T-cell (primary cell): ENCODE measurements at regions of chr4 and their contacts with region 1.

Region 1: GRCh38 chr4:112296949-112297880 is at the start of gene ALPK1:
- DNase-seq: peak in 1 of 35 experiments; percentile 65
- ATAC-seq: peak; percentile 70 to 97 (median 78)
- H3K4me3 ChIP-seq: peak within 1 kb of the TSS; percentile 10 to 36
- H3K4me3 Mint-ChIP-seq: peak within 1 kb of the TSS; percentile 80 to 84 (median 80)
- H3K27ac ChIP-seq: peak within 1 kb of the TSS; percentile 62
- H3K27ac Mint-ChIP-seq: peak within 1 kb of the TSS; percentile 88 to 94
- H3K4me1 ChIP-seq: peaks cover 12 to 39% of the 10 kb centered on the region in 2 experiments
- H3K4me1 Mint-ChIP-seq: peaks cover 25 to 30% (median 30%) of the 10 kb centered on the region in 3 donors
- H3K27me3 ChIP-seq: no peaks in the 10 kb centered on the region
- H3K27me3 Mint-ChIP-seq: no peaks in the 10 kb centered on the region
- total RNA-seq, gene ALPK1: 8.3 to 22.9 (median 9.3) TPM

Region 2: DNA sequence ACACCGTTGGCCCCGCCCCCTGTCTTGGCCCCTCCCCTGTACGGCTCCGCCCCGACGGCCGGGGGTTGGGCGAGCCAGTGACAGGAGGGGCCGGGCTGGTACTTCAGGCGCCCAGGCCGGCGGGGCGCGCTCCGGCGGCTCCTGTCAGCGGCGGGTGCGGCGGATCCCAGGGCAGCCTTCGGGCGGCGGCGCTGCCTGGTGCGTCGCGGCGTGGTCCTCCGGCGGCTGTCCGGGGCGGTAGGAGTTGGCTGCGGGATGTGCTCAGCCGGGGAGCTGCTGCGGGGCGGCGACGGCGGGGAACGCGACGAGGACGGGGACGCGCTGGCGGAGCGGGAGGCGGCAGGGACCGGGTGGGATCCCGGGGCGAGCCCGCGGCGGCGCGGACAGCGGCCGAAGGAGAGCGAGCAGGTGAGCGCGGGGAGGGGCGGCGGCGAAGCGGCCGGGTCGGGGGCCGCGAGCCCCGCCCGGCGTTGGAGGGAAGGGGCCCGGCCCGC is 151.8 kb before region 1 on chr4 and contains the start of gene FAM241A:
- CTCF ChIA-PET with region 1: no interaction called
- POLR2A ChIA-PET with region 1: interaction called in 1 of 2 experiments, 12 read pairs
- DNase-seq: peak; percentile 75 to 96 (median 86)
- ATAC-seq: peak; percentile 90 to 98 (median 96)
- H3K4me3 ChIP-seq: peak within 1 kb of the TSS; percentile 90 to 91
- H3K4me3 Mint-ChIP-seq: peak within 1 kb of the TSS; percentile 82 to 89 (median 86)
- H3K27ac ChIP-seq: peak within 1 kb of the TSS; percentile 80
- H3K27ac Mint-ChIP-seq: peak within 1 kb of the TSS; percentile 68 to 95
- H3K4me1 ChIP-seq: peaks cover 5 to 8% of the 10 kb centered on the region in 2 experiments
- H3K4me1 Mint-ChIP-seq: peaks cover 28 to 45% (median 28%) of the 10 kb centered on the region in 3 donors
- H3K27me3 ChIP-seq: no peaks in the 10 kb centered on the region
- H3K27me3 Mint-ChIP-seq: no peaks in the 10 kb centered on the region
- total RNA-seq, gene FAM241A: 1.4 to 3.4 (median 2.0) TPM

Region 3: DNA sequence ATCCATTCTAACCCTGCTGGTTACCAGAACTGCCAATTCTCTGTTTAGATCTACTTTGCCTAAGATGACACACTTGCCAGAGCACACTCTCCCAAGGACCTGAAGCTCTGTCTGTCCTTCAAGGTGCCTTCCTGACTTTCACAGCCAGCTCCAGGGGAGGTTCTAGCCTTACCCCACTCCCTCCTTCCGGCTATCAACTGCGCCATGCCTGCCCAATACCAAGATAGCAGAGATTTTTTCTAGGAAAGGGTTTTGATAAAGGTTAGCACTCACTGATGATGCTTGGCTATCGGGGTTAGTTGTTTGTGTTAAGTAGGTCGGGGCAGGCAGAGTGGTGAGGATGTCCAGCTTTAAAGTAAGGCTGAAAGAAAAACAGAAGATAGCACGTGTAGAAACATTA is 14.3 kb after region 1 on chr4:
- CTCF ChIA-PET with region 1: no interaction called
- POLR2A ChIA-PET with region 1: no interaction called
- DNase-seq: no peak
- ATAC-seq: no peak
- H3K4me3 ChIP-seq: no peak overlapping the region
- H3K4me3 Mint-ChIP-seq: no peak overlapping the region
- H3K27ac ChIP-seq: no peak overlapping the region
- H3K27ac Mint-ChIP-seq: no peak overlapping the region
- H3K4me1 ChIP-seq: peaks cover 0 to 4% of the 10 kb centered on the region in 2 experiments
- H3K4me1 Mint-ChIP-seq: peaks cover 29 to 33% (median 31%) of the 10 kb centered on the region in 3 donors
- H3K27me3 ChIP-seq: no peaks in the 10 kb centered on the region
- H3K27me3 Mint-ChIP-seq: no peaks in the 10 kb centered on the region

Region 4: GRCh38 chr4:112321776-112322684 is 24.8 kb after region 1 on chr4:
- CTCF ChIA-PET with region 1: interaction called in 1 of 2 experiments, 3 read pairs
- POLR2A ChIA-PET with region 1: interaction called, 8 to 16 read pairs
- DNase-seq: peak; percentile 43 to 89 (median 75)
- ATAC-seq: peak; percentile 69 to 81 (median 71)
- H3K4me3 ChIP-seq: no peak overlapping the region
- H3K4me3 Mint-ChIP-seq: peak overlapping the region in 1 of 3 donors; percentile 36
- H3K27ac ChIP-seq: no peak overlapping the region
- H3K27ac Mint-ChIP-seq: no peak overlapping the region
- H3K4me1 ChIP-seq: peaks cover 0 to 5% of the 10 kb centered on the region in 2 experiments
- H3K4me1 Mint-ChIP-seq: peaks cover 13 to 18% (median 16%) of the 10 kb centered on the region in 3 donors
- H3K27me3 ChIP-seq: no peaks in the 10 kb centered on the region
- H3K27me3 Mint-ChIP-seq: no peaks in the 10 kb centered on the region

Region 5: DNA sequence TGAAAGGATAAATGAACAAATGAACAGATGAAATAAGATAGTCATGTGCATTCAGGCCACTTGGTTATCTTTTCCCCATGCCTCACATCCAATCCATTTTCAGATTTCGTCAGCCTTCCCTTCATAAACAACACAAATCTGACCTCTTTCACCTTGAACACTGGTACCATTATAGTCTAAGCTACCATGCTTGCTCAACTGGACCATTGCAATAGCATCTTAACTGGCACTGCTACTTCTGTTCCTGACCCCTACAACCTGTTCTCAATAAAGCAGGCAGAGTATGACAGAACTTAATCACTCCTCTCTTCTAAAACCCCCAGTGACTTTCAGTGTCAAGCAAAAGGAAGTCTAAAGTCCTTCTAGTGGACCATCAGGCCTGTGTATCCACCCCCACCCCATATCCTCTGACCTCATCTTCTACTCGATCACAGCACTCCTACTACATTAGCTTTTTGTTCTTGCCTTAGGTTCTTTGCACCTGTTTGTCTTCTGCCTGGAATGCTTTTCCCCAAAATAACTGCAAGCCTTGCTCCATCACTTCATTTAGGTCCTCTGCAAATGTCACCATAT is 380.4 kb after region 1 on chr4:
- CTCF ChIA-PET with region 1: no interaction called
- POLR2A ChIA-PET with region 1: no interaction called
- DNase-seq: no peak
- ATAC-seq: no peak
- H3K4me3 ChIP-seq: no peak overlapping the region
- H3K4me3 Mint-ChIP-seq: no peak overlapping the region
- H3K27ac ChIP-seq: no peak overlapping the region
- H3K27ac Mint-ChIP-seq: no peak overlapping the region
- H3K4me1 ChIP-seq: no peaks in the 10 kb centered on the region
- H3K4me1 Mint-ChIP-seq: no peaks in the 10 kb centered on the region
- H3K27me3 ChIP-seq: no peaks in the 10 kb centered on the region
- H3K27me3 Mint-ChIP-seq: no peaks in the 10 kb centered on the region